Activated CD4-positive, alpha-beta T cell treated with anti-CD3 and anti-CD28 coated beads, Interleukin-2, amount 10 ng/mL, durations not matched to agents 7 days and 5 days (primary cell): ENCODE measurements at regions of chr5 and their contacts with region 1.

Region 1: DNA sequence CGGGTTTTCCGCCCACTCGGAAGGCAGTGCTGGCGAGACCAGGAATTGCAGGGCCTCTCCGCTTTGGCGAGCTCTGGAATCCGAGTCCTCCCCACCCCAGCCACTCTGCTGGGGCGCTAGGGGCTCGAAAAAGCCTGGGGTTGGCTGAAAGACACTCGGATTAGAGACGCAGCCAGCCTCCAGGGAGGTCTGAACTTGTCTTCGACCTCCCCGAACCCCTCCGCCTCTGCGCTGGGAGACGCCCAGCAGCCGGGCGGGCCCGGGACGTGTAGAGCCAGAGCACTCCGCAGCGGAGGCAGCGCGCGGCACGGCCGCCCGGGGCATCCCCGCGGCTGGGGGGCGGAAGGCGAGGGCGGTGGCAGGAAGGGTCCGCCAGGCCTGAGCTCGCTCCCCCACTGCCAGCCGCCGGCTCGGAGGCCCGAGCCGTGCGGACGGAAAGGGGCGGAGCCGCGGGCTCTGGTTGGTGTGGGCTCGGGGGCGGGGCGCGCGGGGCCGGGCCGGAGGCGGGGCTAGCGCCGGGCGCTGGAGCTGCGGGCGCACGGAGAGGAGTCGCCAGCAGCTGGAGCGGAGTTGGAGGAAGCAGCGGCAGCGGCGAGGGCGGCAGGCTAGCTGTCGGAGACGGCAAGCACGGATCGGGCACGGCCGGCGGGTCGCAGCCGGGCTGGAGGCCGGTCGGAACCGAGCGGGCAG is at the start of gene PIK3R1:
- DNase-seq: peak; percentile 90
- H3K4me3 Mint-ChIP-seq: peak within 1 kb of the TSS; percentile 81
- H3K27ac Mint-ChIP-seq: peak within 1 kb of the TSS; percentile 94
- H3K4me1 Mint-ChIP-seq: peaks cover 39% of the 10 kb centered on the region
- H3K27me3 Mint-ChIP-seq: no peaks in the 10 kb centered on the region
- total RNA-seq, gene PIK3R1: 75.6 to 97.0 TPM

Region 2: GRCh38 chr5:68141494-68141893 is 73.9 kb before region 1 on chr5:
- CTCF ChIA-PET with region 1: no interaction called
- POLR2A ChIA-PET with region 1: no interaction called
- DNase-seq: no peak
- H3K4me3 Mint-ChIP-seq: no peak overlapping the region
- H3K27ac Mint-ChIP-seq: no peak overlapping the region
- H3K4me1 Mint-ChIP-seq: peaks cover 4% of the 10 kb centered on the region
- H3K27me3 Mint-ChIP-seq: no peaks in the 10 kb centered on the region

Region 3: DNA sequence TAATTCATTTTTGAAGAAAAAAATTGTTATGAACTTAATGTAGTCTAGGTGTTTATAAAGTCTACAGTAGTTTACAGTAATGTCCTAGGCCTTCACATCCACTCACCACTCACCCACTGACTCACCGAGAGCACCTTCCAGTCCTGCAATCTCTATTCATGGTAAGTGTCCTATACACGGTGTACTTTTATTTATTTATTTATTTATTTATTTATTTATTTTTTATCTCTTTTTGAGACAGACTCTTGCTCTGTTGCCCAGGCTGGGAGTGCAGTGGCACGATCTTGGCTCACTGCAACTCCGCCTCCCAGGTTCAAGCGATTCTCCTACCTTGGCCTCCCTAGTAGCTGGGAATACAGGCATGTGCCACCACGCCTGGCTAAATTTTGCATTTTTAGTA is 39.1 kb before region 1 on chr5:
- CTCF ChIA-PET with region 1: no interaction called
- POLR2A ChIA-PET with region 1: interaction called, 10 read pairs
- DNase-seq: no peak
- H3K4me3 Mint-ChIP-seq: no peak overlapping the region
- H3K27ac Mint-ChIP-seq: no peak overlapping the region
- H3K4me1 Mint-ChIP-seq: peaks cover 2% of the 10 kb centered on the region
- H3K27me3 Mint-ChIP-seq: no peaks in the 10 kb centered on the region

Region 4: GRCh38 chr5:68292316-68292715 is 77.0 kb after region 1 on chr5:
- CTCF ChIA-PET with region 1: no interaction called
- POLR2A ChIA-PET with region 1: no interaction called
- DNase-seq: no peak
- H3K4me3 Mint-ChIP-seq: no peak overlapping the region
- H3K27ac Mint-ChIP-seq: peak overlapping the region; percentile 31
- H3K4me1 Mint-ChIP-seq: peaks cover 49% of the 10 kb centered on the region
- H3K27me3 Mint-ChIP-seq: no peaks in the 10 kb centered on the region